Esophagus squamous epithelium (tissue), 5 donors: ENCODE measurements at regions of chr7 and their contacts with region 1.

Region 1: DNA sequence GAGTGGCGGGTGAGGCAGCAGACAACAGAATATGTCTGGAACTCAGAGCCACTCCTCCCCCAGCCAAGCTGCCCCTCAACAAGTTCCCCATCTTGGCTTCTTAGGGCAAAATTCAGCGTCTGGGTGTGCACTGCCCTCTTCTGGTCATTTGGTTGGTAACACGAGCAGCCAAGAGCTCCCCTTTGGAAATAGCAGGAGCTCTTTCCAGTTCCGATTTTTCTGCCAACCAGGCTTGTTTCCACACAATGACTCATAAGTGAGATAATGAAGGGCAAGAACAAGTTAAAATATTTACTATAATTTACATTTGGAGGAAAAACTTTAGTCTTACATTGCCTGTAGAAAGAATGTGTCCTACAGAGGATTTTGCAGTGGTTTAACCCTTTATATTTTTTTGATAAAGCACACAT is 70.5 kb downstream of the ADCYAP1R1 start:
- DNase-seq: no peak
- H3K4me3 ChIP-seq: no peak overlapping the region
- H3K27ac ChIP-seq: no peak overlapping the region
- H3K4me1 ChIP-seq: peaks cover 0 to 4% (median 0%) of the 10 kb centered on the region in 3 donors
- H3K27me3 ChIP-seq: no peaks in the 10 kb centered on the region
- CTCF ChIP-seq: peak; percentile 35 to 81 (median 73)
- POLR2A ChIP-seq: no peak

Region 2: DNA sequence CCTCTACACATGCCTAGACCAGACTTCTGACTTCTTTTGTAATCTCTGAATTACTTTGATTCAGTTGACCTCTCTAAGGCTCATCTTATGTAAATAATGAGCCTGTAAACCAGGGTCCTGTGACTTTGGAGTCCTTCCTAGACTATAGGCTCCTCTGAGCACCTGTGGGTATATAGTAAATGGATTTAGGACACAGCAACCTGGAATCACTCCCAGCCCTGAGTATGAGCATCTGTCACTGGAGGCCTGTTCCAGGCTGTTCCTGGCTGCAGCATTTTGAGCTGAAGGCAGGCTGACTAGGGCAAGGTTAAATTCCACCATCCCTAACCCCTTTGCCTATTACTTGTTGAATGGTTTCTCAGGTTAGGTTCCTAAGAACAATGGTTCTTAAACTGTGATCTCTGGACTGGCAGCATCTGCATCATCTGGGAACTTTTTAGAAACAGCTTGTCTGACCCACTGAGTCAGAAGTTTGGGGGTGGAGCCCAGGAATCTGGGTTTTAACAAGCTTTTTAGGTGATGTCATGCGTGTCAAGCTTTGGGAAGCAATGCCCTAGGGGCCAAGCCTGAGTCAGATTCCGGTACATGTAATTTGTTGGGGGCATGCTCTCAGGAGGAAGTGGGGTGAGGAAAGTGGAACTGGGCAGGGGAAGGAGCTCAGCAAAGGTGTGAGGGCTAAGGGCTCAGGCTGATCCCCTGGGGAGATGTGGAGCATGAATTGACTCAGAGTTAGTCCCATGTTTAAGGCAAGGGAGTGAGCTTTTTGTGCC is 323.3 kb before region 1 on chr7:
- intact Hi-C with region 1: loop called (anchors 10 kb)
- DNase-seq: no peak
- H3K4me3 ChIP-seq: no peak overlapping the region
- H3K27ac ChIP-seq: peak overlapping the region in 2 of 4 donors; percentile 52 to 70
- H3K4me1 ChIP-seq: peaks cover 12 to 76% (median 43%) of the 10 kb centered on the region in 3 donors
- H3K27me3 ChIP-seq: no peaks in the 10 kb centered on the region
- CTCF ChIP-seq: no peak
- POLR2A ChIP-seq: no peak

Region 3: DNA sequence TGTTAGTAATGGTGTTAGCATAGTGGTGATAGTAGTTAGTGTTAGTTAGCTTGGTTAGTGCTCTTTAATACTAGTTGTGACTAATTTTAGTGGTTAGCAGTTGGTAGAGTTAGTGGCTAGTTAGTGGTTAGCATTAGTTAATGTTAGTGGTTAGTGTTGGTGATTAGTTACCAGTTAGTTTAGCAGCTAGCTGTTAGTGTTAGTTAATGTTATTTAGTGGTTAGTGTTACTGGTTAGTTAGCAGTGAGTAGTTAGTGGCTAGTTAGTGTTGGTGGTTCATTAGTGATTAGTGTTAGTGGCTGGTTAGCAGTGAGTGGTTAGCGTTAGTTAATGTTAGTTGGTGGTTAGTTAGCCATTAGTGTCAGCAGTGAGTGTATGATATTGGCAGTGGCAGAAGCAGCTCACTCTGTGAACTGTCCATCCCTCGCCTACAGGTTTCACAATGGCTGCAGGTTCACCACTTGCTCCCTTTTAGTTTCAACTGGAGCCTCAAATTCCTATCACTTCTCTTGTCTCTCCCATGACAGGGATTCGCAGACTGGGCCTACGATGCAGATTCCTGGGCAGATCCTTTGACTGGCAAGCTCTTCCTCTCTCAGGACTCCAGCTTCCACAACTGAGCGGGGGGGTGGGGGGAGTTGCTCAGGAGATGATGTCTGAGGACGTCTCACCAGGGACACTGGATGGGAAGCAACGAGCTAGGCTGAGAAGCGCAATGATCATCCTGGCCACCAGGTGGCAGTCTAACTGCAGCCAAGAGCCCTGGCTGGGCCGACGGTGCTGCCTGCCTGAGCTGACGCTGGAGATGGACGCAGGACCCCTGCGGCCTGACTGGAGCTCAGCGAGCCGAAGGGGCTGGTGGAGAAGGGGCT is 139.4 kb before region 1 on chr7:
- intact Hi-C with region 1: loop called (anchors 5 kb)
- DNase-seq: no peak
- H3K4me3 ChIP-seq: no peak overlapping the region
- H3K27ac ChIP-seq: no peak overlapping the region
- H3K4me1 ChIP-seq: peaks cover 1 to 28% (median 3%) of the 10 kb centered on the region in 3 donors
- H3K27me3 ChIP-seq: peaks cover 0 to 28% (median 0%) of the 10 kb centered on the region in 4 donors
- CTCF ChIP-seq: peak; percentile 82 to 96 (median 88)
- POLR2A ChIP-seq: no peak

Region 4: GRCh38 chr7:31302356-31302755 is 179.7 kb after region 1 on chr7:
- intact Hi-C with region 1: no loop called
- DNase-seq: no peak
- H3K4me3 ChIP-seq: no peak overlapping the region
- H3K27ac ChIP-seq: no peak overlapping the region
- H3K4me1 ChIP-seq: no peaks in the 10 kb centered on the region
- H3K27me3 ChIP-seq: no peaks in the 10 kb centered on the region
- CTCF ChIP-seq: no peak
- POLR2A ChIP-seq: no peak